Posterior cingulate gyrus (tissue), 11 donors: ENCODE measurements at regions of chr12 and their contacts with region 1.

Region 1: DNA sequence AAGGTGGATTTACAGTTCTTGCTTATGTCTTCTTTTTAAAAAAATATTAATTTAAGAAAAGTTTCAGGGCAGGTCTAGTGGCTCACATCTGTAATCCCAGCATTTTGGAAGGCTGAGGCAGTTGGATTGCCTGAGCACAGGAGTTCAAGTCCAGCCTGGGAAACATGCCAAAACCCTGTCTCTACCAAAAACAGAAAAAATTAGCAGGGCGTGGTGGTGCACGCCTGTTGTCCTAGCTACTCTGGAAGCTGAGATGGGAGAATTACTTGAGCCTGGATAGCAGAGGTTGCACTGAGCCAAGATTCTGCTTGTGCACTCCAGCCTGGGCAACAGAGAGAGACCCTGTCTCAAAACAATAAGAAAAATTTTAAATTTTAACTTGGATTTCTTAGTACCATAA is 5.4 kb upstream of the TAS2R46 start:
- DNase-seq: no peak

Region 2: GRCh38 chr12:11015775-11016430 is 51.6 kb before region 1 on chr12:
- intact Hi-C with region 1: loop called (anchors 2 kb)
- DNase-seq: no peak

Region 3: GRCh38 chr12:11171145-11171968 is 103.8 kb after region 1 on chr12 and contains the start of gene SMIM10L1:
- intact Hi-C with region 1: no loop called
- DNase-seq: peak; percentile 82 to 98 (median 90)